ENCODE measurements at regions of chr18 and their contacts with region 1.

Region 1: GRCh38 chr18:31685097-31686082 is 1.0 kb upstream of the B4GALT6 start:
- DNase-seq: peak; percentile 28
- H3K4me3 Mint-ChIP-seq: peak overlapping the region; percentile 83
- H3K27ac Mint-ChIP-seq: peak overlapping the region; percentile 68
- H3K4me1 Mint-ChIP-seq: peaks cover 14% of the 10 kb centered on the region
- H3K27me3 Mint-ChIP-seq: peaks cover 47% of the 10 kb centered on the region

Region 2: DNA sequence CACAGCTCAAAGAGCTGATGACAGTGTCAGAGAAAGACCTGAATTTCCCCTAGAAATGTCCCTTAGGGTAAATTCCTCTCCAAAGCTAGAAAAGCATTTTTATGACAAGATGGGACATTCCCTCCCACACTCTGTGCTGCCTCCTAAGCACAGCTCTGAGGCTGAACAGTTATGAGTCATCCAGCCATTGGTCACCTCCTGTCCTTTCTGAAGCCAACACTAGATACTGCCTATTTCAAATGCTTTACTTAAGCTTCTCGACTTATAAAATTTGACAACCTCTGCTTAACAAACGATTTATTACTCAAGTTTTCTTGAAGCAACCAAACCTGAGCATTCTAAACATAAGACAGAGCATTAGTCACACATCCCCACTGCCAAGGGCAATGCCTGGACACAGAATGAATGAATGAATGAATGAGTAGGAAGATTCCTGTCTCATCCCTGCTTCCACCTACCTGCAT is 36.4 kb before region 1 on chr18:
- intact Hi-C with region 1: loop called (anchors 5 kb)
- DNase-seq: no peak
- H3K4me3 Mint-ChIP-seq: no peak overlapping the region
- H3K27ac Mint-ChIP-seq: no peak overlapping the region
- H3K4me1 Mint-ChIP-seq: peaks cover 11% of the 10 kb centered on the region
- H3K27me3 Mint-ChIP-seq: peaks cover 16% of the 10 kb centered on the region

Region 3: GRCh38 chr18:32086861-32087260 is 401.5 kb after region 1 on chr18:
- intact Hi-C with region 1: loop called (anchors 10 kb)
- DNase-seq: no peak
- H3K4me3 Mint-ChIP-seq: no peak overlapping the region
- H3K27ac Mint-ChIP-seq: no peak overlapping the region
- H3K4me1 Mint-ChIP-seq: peaks cover 38% of the 10 kb centered on the region
- H3K27me3 Mint-ChIP-seq: peaks cover 4% of the 10 kb centered on the region